Prostate gland (tissue), 2 donors: ENCODE measurements at regions of chr19 and their contacts with region 1.

Region 1: GRCh38 chr19:50383852-50384684 is at the start of gene POLD1:
- DNase-seq: peak; percentile 98
- H3K4me3 ChIP-seq: peak within 1 kb of the TSS; percentile 41 to 63
- H3K27ac ChIP-seq: peak within 1 kb of the TSS; percentile 72 to 82
- H3K4me1 ChIP-seq: peaks cover 5% of the 10 kb centered on the region
- H3K27me3 ChIP-seq: no peaks in the 10 kb centered on the region
- CTCF ChIP-seq: peak in 1 of 4 experiments; percentile 7
- POLR2A ChIP-seq: peak; percentile 39
- total RNA-seq, gene POLD1: 15.6 to 35.7 TPM

Region 2: DNA sequence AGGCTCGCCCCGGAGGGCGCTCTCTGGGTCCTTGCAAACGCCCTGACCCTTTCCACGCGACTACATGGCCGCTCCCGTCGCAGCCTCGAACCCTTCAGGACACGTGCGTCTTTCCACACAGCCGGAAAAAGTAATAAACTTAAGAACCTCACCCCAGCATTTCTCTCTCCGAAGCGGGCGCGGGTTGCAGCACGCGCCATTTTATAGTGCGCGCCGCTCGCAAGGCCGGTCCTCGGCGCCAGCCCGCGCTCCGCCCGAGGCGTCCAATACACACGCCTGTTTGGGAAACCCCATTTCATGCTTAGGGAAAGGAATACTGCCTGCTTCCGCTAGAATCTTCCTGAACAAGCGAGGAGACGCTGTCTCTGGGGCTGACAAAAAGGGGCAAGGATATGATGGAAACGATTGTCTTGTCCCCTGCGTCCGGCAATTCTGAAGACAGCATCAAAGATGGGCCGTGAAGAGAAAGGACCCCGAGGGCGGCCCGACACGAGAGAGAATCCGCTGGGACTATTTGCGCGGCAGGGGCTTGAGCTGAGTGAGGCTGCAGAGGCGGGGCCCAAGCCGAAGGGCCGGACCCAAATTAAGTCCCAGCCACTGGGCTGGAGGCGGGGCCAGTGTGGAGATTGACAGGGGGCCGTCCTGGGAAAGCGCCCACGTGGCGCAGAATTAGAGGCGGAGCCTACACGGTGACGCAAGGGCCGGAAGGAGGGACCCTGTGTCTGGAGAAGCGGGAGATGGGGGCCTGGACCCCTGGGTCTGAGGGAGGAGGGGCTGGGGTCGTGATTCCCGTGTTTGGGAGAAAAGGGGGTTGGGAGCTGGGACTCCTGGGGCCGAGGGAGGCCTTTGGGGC is 420.6 kb after region 1 on chr19:
- intact Hi-C with region 1: loop called (anchors 10 kb)
- DNase-seq: peak; percentile 99
- H3K4me3 ChIP-seq: peak overlapping the region; percentile 76 to 92
- H3K27ac ChIP-seq: peak overlapping the region; percentile 93 to 96
- H3K4me1 ChIP-seq: peaks cover 5% of the 10 kb centered on the region
- H3K27me3 ChIP-seq: no peaks in the 10 kb centered on the region
- CTCF ChIP-seq: peak in 2 of 4 experiments; percentile 16 to 26
- POLR2A ChIP-seq: peak; percentile 62